ENCODE measurements at regions of chr10 and their contacts with region 1.

Region 1: GRCh38 chr10:78316451-78316931 is 282.8 kb downstream of the RPS24 start:
- DNase-seq: peak; percentile 47
- ATAC-seq: peak; percentile 66
- H3K4me3 ChIP-seq: no peak overlapping the region
- H3K27ac ChIP-seq: no peak overlapping the region
- H3K4me1 ChIP-seq: peaks cover 3% of the 10 kb centered on the region; the same call in 1 of the 2 replicates
- H3K27me3 ChIP-seq: peaks cover 4% of the 10 kb centered on the region
- CTCF ChIP-seq: no peak
- POLR2A ChIP-seq: no peak
- RAD21 ChIP-seq: no peak

Region 2: DNA sequence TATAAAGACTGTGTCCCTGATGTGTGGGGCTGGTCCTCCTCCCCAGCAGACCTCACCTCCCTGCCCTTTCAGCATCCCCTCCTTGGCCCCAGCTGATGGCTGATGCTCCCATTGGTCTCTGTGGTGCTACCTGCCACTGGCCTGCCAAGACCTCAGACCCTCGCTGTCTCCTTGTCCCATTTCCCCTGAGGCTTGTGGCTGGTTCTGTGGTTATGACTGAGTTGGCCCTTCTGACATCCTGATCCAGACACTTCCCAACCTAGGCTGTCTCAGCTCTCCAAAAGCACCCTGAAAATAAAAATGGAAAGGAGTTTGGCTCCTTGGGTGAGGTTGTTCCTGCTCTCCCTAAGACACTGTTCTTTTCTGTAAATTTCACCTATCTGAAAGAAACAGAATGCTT is 68.7 kb before region 1 on chr10:
- CTCF ChIA-PET with region 1: no interaction called
- POLR2A ChIA-PET with region 1: interaction called, 11 read pairs
- dilution Hi-C with region 1: no loop called
- in situ Hi-C with region 1: no loop called
- intact Hi-C with region 1: no loop called
- DNase-seq: no peak
- ATAC-seq: no peak
- H3K4me3 ChIP-seq: no peak overlapping the region
- H3K27ac ChIP-seq: peak overlapping the region; percentile 6; the same call in 1 of the 2 replicates
- H3K4me1 ChIP-seq: peaks cover 15% of the 10 kb centered on the region
- H3K27me3 ChIP-seq: no peaks in the 10 kb centered on the region
- CTCF ChIP-seq: no peak
- POLR2A ChIP-seq: no peak
- RAD21 ChIP-seq: no peak

Region 3: GRCh38 chr10:78348411-78349166 is 32.1 kb after region 1 on chr10:
- CTCF ChIA-PET with region 1: no interaction called
- POLR2A ChIA-PET with region 1: no interaction called
- dilution Hi-C with region 1: no loop called
- in situ Hi-C with region 1: no loop called
- intact Hi-C with region 1: no loop called
- DNase-seq: no peak
- ATAC-seq: no peak
- H3K4me3 ChIP-seq: no peak overlapping the region
- H3K27ac ChIP-seq: no peak overlapping the region
- H3K4me1 ChIP-seq: no peaks in the 10 kb centered on the region
- H3K27me3 ChIP-seq: peaks cover 42% of the 10 kb centered on the region
- CTCF ChIP-seq: no peak
- POLR2A ChIP-seq: no peak
- RAD21 ChIP-seq: no peak

Region 4: DNA sequence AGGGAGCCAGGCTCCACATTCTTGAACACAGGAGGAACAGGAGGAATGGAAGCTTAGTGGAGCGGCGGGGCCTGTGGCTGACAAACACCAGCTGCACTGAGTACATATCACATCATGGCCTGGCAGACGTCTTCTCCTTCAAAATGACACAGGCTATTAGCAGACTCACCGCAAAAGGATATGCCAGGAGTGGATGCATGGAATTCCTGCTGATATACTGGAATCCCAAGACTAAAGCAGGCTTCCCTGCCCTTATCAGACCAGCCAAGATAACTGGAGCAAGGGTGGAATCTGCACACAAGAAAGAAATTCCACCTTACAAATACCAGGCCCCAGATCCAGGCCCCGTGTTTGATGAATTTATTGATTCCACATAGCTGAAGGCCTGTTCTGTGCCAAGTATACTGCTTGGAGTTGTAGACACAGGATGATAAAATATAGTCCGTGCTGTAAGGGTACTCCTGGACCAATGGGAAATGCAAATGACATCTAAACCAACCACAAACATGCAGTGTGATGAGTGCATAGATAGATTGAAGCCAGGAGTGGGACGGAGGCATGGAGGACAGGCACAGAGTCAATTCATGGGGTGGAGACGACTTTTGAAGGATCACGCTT is 271.8 kb after region 1 on chr10:
- CTCF ChIA-PET with region 1: no interaction called
- POLR2A ChIA-PET with region 1: no interaction called
- dilution Hi-C with region 1: no loop called
- in situ Hi-C with region 1: no loop called
- intact Hi-C with region 1: no loop called
- DNase-seq: peak; percentile 87
- ATAC-seq: peak; percentile 92
- H3K4me3 ChIP-seq: no peak overlapping the region
- H3K27ac ChIP-seq: peak overlapping the region; percentile 80; the same call in 1 of the 2 replicates
- H3K4me1 ChIP-seq: peaks cover 9% of the 10 kb centered on the region
- H3K27me3 ChIP-seq: peaks cover 12% of the 10 kb centered on the region
- CTCF ChIP-seq: no peak
- POLR2A ChIP-seq: no peak
- RAD21 ChIP-seq: no peak